ENCODE measurements at regions of chr9 and their contacts with region 1.

Region 1: GRCh38 chr9:126558051-126558665 is 55.6 kb upstream of the LMX1B start:
- DNase-seq: no peak
- H3K4me3 ChIP-seq: no peak overlapping the region
- H3K27me3 ChIP-seq: peaks cover 12% of the 10 kb centered on the region
- CTCF ChIP-seq: peak; percentile 98

Region 2: DNA sequence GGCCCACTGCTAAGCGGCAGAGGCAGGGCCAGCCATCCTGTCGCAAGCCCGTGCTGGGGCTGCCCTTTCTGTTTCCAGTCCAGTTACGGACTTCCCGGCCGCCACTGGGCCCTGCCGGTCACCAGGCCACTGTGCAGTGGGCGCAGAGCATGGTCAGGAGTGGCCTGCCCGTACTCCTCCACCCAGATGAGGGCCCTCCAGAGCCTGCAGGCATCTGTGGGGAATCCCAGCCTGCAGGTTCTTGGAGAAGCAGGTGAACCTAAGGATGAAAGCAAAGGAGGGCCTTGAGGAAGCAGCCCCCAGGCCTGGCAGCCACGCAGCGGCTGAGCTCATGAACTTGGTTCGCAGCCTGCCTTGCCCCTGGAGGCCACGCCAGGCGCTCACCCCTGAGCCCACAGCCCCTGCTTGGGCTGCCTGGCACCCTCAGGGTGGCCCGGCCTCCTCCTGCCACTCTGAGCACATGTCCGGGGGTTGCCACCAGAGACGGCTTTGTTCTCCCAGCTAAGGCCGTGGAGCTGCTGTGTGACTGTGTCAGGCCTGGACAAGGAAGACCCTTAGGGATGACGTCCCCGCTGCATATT is 51.7 kb before region 1 on chr9:
- CTCF ChIA-PET with region 1: interaction called, 209 read pairs
- POLR2A ChIA-PET with region 1: no interaction called
- DNase-seq: no peak
- H3K4me3 ChIP-seq: no peak overlapping the region
- H3K27me3 ChIP-seq: peaks cover 3% of the 10 kb centered on the region; the same call in 1 of the 2 replicates
- CTCF ChIP-seq: no peak

Region 3: GRCh38 chr9:126514047-126514821 is 43.9 kb before region 1 on chr9:
- CTCF ChIA-PET with region 1: interaction called, 50 read pairs
- POLR2A ChIA-PET with region 1: no interaction called
- DNase-seq: no peak
- H3K4me3 ChIP-seq: no peak overlapping the region
- H3K27me3 ChIP-seq: peaks cover 8% of the 10 kb centered on the region
- CTCF ChIP-seq: 0 out of 2 replicates have a peak, but pooled peaks have one; percentile 6

Region 4: GRCh38 chr9:126532019-126532462 is 26.1 kb before region 1 on chr9:
- CTCF ChIA-PET with region 1: interaction called, 15 read pairs
- POLR2A ChIA-PET with region 1: no interaction called
- DNase-seq: no peak
- H3K4me3 ChIP-seq: no peak overlapping the region
- H3K27me3 ChIP-seq: peaks cover 14% of the 10 kb centered on the region
- CTCF ChIP-seq: no peak

Region 5: DNA sequence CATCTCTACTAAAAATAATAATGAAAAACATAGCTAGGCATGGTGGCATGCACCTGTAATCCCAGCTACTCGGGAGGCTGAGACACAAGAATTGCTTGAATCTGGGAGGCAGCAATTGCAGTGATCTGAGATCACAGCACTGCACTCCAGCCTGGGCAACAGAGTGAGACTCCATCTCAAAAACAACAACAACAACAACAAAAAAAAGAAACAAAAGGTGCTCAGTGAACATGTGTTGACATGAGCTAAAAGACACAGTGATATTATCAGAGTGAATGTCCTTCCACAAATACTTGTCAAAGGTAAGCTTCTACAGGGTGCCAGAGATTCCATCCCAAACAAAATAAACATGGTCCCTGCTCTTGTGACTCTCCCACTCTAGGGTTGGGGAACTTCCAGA is 19.6 kb before region 1 on chr9:
- CTCF ChIA-PET with region 1: interaction called, 18 read pairs
- POLR2A ChIA-PET with region 1: no interaction called
- DNase-seq: no peak
- H3K4me3 ChIP-seq: no peak overlapping the region
- H3K27me3 ChIP-seq: peaks cover 13% of the 10 kb centered on the region
- CTCF ChIP-seq: no peak

Region 6: GRCh38 chr9:126690431-126691350 is 132.5 kb after region 1 on chr9:
- CTCF ChIA-PET with region 1: no interaction called
- POLR2A ChIA-PET with region 1: no interaction called
- DNase-seq: no peak
- H3K4me3 ChIP-seq: no peak overlapping the region
- H3K27me3 ChIP-seq: peaks cover 3% of the 10 kb centered on the region; the same call in 1 of the 2 replicates
- CTCF ChIP-seq: peak; percentile 63